ENCODE measurements at regions of chr9 and their contacts with region 1.

Region 1: DNA sequence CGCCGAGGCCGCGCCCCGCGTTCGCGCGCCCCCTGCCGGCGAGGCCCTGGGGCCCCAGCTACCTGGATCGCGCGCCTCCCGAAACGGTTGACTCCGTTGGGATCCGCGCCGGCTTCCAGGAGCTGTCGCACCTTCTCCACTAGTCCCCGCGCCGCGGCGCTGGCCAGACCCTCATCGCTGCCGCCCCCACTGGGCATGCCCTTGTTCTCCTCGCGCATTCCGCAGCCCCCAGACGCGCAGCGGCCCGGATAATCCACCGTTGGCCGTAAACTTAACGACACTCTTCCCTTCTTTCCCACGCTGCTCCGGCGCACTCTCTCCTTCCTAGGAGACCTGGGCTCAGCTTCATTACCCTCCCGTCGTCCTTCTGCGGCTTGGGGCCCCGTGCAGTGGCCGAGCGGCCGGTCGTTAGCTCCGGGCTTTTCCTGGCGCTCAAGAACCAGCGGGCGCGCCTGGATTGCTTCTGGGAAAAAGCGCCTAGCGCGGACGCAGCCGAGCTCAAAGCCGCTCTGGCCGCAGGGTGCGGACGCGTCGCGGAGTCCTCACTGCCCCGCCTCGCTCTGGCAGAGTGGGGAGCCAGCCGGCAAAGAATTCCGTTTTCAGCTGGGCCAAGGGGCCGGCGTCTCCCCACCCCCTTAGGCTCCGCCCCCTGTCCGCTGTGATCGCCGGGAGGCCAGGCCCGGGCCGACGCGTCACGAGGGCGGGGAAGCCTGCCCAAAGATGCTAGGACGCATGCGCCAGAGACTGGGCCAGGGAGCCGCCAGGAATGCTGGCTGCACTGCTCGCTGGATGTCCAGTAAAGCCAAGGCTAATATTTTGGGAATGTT is at the start of gene CDKN2B:
- DNase-seq: peak; percentile 84
- H3K4me3 Mint-ChIP-seq: peak within 1 kb of the TSS; percentile 81
- H3K27ac Mint-ChIP-seq: no peak within 1 kb of the TSS
- H3K4me1 Mint-ChIP-seq: peaks cover 24% of the 10 kb centered on the region
- H3K27me3 Mint-ChIP-seq: peaks cover 54% of the 10 kb centered on the region
- total RNA-seq, gene CDKN2B: 0.05 to 0.10 TPM

Region 2: GRCh38 chr9:21761309-21761901 is 247.5 kb before region 1 on chr9:
- CTCF ChIA-PET with region 1: no interaction called
- POLR2A ChIA-PET with region 1: no interaction called
- intact Hi-C with region 1: no loop called
- DNase-seq: peak; percentile 42
- H3K4me3 Mint-ChIP-seq: no peak overlapping the region
- H3K27ac Mint-ChIP-seq: no peak overlapping the region
- H3K4me1 Mint-ChIP-seq: peaks cover 10% of the 10 kb centered on the region
- H3K27me3 Mint-ChIP-seq: peaks cover 40% of the 10 kb centered on the region

Region 3: GRCh38 chr9:21965401-21965951 is 43.5 kb before region 1 on chr9:
- CTCF ChIA-PET with region 1: interaction called, 47 read pairs
- POLR2A ChIA-PET with region 1: no interaction called
- intact Hi-C with region 1: no loop called
- DNase-seq: peak; percentile 71
- H3K4me3 Mint-ChIP-seq: peak overlapping the region; percentile 54
- H3K27ac Mint-ChIP-seq: no peak overlapping the region
- H3K4me1 Mint-ChIP-seq: peaks cover 22% of the 10 kb centered on the region
- H3K27me3 Mint-ChIP-seq: peaks cover 84% of the 10 kb centered on the region

Region 4: GRCh38 chr9:21985964-21986667 is 22.8 kb before region 1 on chr9:
- CTCF ChIA-PET with region 1: interaction called, 88 read pairs
- POLR2A ChIA-PET with region 1: interaction called, 4 read pairs
- intact Hi-C with region 1: no loop called
- DNase-seq: no peak
- H3K4me3 Mint-ChIP-seq: no peak overlapping the region
- H3K27ac Mint-ChIP-seq: no peak overlapping the region
- H3K4me1 Mint-ChIP-seq: peaks cover 2% of the 10 kb centered on the region
- H3K27me3 Mint-ChIP-seq: peaks cover 40% of the 10 kb centered on the region

Region 5: GRCh38 chr9:22037954-22038690 is 29.2 kb after region 1 on chr9:
- CTCF ChIA-PET with region 1: interaction called, 68 read pairs
- POLR2A ChIA-PET with region 1: no interaction called
- intact Hi-C with region 1: loop called (anchors 1 kb)
- DNase-seq: no peak
- H3K4me3 Mint-ChIP-seq: no peak overlapping the region
- H3K27ac Mint-ChIP-seq: no peak overlapping the region
- H3K4me1 Mint-ChIP-seq: peaks cover 16% of the 10 kb centered on the region
- H3K27me3 Mint-ChIP-seq: peaks cover 7% of the 10 kb centered on the region

Region 6: GRCh38 chr9:22079873-22080341 is 71.0 kb after region 1 on chr9:
- CTCF ChIA-PET with region 1: interaction called, 11 read pairs
- POLR2A ChIA-PET with region 1: no interaction called
- intact Hi-C with region 1: loop called (anchors 5 kb)
- DNase-seq: peak; percentile 76
- H3K4me3 Mint-ChIP-seq: peak overlapping the region; percentile 24
- H3K27ac Mint-ChIP-seq: peak overlapping the region; percentile 42
- H3K4me1 Mint-ChIP-seq: peaks cover 43% of the 10 kb centered on the region
- H3K27me3 Mint-ChIP-seq: peaks cover 52% of the 10 kb centered on the region

Region 7: GRCh38 chr9:22119537-22120158 is 110.7 kb after region 1 on chr9:
- CTCF ChIA-PET with region 1: interaction called, 45 read pairs
- POLR2A ChIA-PET with region 1: no interaction called
- intact Hi-C with region 1: loop called (anchors 1 kb)
- DNase-seq: peak; percentile 15
- H3K4me3 Mint-ChIP-seq: no peak overlapping the region
- H3K27ac Mint-ChIP-seq: no peak overlapping the region
- H3K4me1 Mint-ChIP-seq: no peaks in the 10 kb centered on the region
- H3K27me3 Mint-ChIP-seq: peaks cover 21% of the 10 kb centered on the region